ENCODE measurements at regions of chr9 and their contacts with region 1.

Region 1: GRCh38 chr9:4180907-4181605 is 118.8 kb downstream of the GLIS3 start:
- DNase-seq: no peak
- H3K4me3 Mint-ChIP-seq: no peak overlapping the region
- H3K27ac Mint-ChIP-seq: no peak overlapping the region
- H3K4me1 Mint-ChIP-seq: no peaks in the 10 kb centered on the region
- H3K27me3 Mint-ChIP-seq: peaks cover 4% of the 10 kb centered on the region

Region 2: DNA sequence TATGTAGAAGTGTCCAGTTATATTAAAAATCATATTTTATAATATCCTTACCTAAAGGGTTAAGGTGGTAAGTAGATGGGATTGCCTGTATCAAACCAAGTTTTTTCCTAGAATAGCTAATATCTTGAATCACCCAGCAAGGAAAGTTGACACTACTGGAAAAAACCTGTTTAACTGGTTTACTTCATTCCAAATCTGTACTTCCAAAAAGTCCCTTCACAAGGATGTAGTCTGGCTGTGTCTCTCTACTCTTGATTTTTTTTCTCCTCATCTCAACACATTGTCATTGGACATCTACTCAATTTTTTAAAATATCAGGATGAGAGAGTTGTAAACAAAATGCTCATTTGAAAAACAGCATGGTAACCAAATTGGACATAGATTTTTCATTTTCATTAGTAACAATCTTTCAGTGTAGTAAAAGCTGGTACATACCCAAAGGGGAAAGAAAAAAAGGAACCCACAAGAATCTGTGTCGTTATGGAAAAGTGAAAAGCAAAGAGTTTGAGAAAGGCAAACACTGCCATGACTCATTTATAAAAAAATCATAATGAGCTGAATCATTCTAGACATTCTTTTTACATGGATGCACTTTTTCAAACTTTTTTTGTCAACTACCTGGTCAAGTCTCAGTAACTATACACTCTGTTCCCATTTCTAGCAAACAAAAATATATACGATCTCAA is 54.7 kb before region 1 on chr9:
- intact Hi-C with region 1: loop called (anchors 10 kb)
- DNase-seq: no peak
- H3K4me3 Mint-ChIP-seq: no peak overlapping the region
- H3K27ac Mint-ChIP-seq: no peak overlapping the region
- H3K4me1 Mint-ChIP-seq: no peaks in the 10 kb centered on the region
- H3K27me3 Mint-ChIP-seq: peaks cover 2% of the 10 kb centered on the region

Region 3: DNA sequence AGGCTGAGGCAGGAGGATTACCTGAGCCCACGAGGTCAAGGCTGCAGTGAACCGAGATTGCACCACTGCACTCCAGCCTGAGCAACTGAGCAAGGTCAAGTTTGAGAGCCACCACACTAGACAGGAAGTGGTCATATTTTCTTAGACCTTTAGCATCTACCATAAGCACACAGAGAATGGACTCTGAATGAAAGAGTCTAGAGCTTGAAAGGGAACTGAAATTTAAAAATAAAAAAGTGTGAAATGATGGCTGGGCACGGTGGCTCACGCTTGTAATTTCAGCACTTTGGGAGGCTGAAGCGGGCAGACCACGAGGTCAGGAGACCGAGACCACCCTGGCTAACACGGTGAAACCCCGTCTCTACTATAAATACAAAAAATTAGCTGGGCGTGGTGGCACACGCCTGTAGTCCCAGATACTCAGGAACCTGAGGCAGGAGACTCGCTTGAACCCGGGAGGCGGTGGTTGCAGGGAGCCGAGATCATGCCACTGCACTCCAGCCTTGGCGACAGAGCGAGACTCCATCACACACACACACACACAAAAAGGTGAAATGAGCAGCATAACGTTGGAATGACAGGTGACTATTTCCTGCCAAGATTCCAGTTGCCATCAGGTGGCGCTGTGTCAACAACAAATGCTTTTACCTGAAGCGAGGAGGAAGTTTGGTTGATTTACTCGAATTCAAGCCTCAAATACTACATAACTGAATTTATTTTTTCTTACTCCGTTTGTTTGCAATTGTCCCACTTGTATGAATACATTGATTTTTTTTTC is 581.2 kb after region 1 on chr9:
- intact Hi-C with region 1: no loop called
- DNase-seq: peak; percentile 72
- H3K4me3 Mint-ChIP-seq: peak overlapping the region; percentile 68
- H3K27ac Mint-ChIP-seq: peak overlapping the region; percentile 65
- H3K4me1 Mint-ChIP-seq: peaks cover 18% of the 10 kb centered on the region
- H3K27me3 Mint-ChIP-seq: no peaks in the 10 kb centered on the region

Measured in activated T-helper 1 cell treated with anti-CD3 and anti-CD28 coated beads, Interleukin-12 subunit alpha, Interleukin-12 subunit beta, Interleukin-2, Interleukin-4 antibody, amounts not matched to agents 30 ng/mL and 10 ng/mL and 1 ng/mL, durations not matched to agents 14 hours and 24 hours and 36 hours (primary cell).